HEK293T (cell line): ENCODE measurements at regions of chr14 and their contacts with region 1.

Region 1: GRCh38 chr14:20682435-20683124 is 1.8 kb upstream of the RNASE4 start:
- DNase-seq: peak; percentile 67

Region 2: GRCh38 chr14:20343092-20343861 is 339.3 kb before region 1 on chr14 and contains the start of gene PARP2:
- CTCF ChIA-PET with region 1: no interaction called
- POLR2A ChIA-PET with region 1: interaction called, 22 read pairs
- DNase-seq: peak; percentile 97

Region 3: DNA sequence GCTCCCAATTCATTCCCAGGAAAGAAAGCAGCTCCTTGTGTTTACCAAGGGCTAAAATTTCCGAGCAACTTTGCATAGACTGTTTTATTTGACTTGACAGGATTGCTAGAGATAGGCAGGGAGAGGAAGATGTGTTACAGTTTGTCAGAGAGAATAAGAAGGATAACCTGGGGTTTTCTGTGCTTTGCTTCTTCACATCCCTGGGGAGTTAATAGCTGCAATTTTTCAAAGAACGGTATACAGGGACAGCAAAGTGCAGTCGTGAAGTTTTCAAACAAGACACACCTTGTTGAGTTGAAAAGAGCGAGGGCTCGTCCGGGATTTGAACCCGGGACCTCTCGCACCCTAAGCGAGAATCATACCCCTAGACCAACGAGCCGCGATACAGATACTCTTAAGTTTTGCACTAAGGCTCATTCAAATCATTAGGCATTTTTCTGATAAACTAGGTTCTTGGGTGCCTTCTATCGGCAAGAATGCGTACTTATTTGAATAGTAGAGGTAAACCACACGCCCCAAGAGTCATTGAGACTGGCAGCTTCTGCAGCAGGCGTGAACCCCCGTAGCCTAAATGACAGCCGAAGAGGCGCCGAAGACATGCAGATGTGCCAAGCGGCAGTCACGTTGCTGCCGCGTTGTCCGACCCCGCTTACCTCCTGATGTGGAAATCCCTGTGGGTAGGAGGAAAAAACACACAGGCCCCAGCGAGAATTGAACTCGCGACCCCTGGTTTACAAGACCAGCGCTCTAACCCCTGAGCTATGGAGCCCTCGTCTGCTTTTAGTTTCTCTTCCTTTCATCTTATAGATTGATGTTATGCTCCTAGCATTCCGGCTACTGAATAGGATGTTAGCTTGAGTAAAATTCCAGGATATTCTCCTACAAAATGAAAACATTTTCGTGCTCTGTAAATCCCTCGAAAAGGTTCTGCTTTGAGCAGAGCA is 69.2 kb before region 1 on chr14:
- CTCF ChIA-PET with region 1: interaction called, 9 read pairs
- POLR2A ChIA-PET with region 1: interaction called, 71 read pairs
- DNase-seq: peak; percentile 71

Region 4: GRCh38 chr14:20632682-20633428 is 49.7 kb before region 1 on chr14:
- CTCF ChIA-PET with region 1: interaction called, 3 read pairs
- POLR2A ChIA-PET with region 1: interaction called, 80 read pairs
- DNase-seq: peak; percentile 65

Region 5: GRCh38 chr14:20662968-20663732 is 19.4 kb before region 1 on chr14:
- CTCF ChIA-PET with region 1: interaction called, 27 read pairs
- POLR2A ChIA-PET with region 1: interaction called, 104 read pairs
- DNase-seq: peak; percentile 74